GM18951 (cell line): ENCODE measurements at regions of chr9 and their contacts with region 1.

Region 1: DNA sequence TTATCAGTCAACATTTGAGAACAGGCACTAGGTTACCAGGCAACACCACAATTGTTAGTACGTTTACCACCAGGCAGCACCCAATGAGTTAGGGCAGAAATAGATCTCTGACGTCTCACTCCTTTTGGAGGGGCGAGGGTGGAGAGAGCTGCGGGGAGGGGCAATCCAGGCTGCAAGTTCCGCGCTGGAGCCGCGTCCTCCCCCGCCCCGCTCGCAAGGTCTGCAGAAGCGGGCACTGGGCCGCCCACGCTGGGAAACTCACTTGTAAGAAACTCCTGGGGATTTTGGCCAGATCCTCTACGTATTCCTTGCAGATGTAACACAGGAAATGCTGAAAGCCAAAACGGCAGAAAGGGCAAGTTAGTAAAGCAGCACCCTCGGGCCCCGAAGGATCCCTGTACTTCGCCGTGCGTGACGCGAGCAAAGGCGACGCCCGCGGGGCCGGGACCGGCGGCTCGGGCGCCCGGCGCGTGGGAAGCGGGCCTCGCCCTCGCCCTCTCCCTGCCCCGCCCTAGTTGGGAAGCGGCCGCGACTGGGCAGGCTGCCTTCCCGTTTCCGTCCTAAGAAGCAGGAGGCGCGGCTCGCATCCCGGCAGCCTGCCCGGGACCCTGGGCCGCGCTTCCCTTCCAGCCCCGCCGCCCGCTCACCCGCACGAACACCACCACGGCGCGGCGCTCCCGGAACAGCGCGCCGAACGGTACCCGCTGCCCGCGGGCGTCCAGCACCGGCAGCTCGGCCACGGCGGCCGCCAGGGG is 497 bp downstream of the PRXL2C start:
- POLR2A ChIP-seq: no peak

Region 2: DNA sequence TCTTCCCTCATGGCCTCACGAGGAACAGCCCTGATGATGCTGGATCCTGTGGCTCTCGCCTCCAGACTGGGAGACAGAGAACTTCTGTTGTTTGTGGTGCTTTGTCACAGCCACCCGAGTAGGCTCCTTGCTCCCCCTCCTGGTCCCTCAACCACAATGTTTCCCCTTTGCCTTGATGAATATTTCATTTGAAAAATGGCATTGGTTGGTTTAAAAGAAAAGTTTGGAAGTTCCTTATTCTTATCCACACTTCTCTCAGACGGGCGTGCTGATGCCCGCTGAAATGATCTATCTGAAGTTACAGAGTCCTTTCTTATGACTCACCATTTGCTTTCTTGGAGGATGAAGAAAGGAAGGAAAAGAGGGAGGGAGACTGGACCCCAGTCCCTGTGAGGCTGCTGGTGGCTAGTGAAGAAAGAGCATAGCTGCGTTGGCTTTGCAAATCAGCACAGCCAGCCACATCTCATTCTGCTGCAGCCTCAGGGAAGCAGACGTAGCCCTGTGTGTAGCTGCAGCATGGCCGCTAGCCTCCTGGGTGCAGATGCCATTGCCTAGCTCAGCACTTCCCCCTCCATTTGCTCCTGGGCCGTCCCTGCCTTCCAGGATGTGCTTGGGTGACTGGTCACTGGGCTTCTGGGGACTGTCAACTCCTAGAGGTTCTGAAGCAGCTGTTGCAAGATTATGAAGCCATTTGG is 593.2 kb before region 1 on chr9:
- in situ Hi-C with region 1: no loop called
- POLR2A ChIP-seq: no peak

Region 3: GRCh38 chr9:96331236-96331947 is 323.2 kb before region 1 on chr9:
- in situ Hi-C with region 1: loop called (anchors 10 kb)
- POLR2A ChIP-seq: no peak

Region 4: GRCh38 chr9:96769989-96770388 is 115.4 kb after region 1 on chr9:
- in situ Hi-C with region 1: no loop called
- POLR2A ChIP-seq: no peak